PC-3 (cell line): ENCODE measurements at regions of chr22 and their contacts with region 1.

Region 1: DNA sequence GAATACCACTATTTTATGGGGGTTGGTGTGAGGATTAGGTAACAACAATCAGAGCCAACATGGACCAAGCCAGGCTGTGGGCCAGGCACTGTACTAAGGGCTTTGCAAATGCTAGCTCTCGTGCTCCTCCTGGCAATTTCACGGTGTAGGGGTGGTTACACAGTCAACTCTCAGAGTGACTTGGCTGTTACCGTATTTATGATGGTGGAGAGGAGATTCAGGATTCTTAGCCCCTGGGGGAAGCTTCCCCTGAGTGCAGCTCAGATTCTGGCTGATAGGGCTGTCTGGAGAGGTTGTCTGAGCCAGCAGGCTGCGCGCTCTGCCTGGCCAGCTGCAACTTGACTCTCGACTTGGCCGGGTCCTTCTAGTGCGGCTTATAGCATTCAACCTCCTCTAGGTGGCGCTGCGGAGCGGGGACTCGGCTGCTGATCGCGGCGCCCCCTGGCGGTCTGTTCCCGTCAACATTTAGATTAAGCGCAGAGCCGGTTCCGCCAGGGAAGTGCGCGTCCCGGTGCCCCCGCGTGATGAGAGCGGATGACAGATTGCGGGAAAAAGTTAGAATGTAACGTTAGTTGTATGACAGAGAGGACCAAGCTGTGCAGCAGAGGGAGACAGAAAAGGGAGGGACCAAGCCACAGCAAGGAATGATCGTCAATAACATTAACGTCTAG is 4.5 kb upstream of the NCF4 start:
- DNase-seq: peak; percentile 76
- ATAC-seq: peak; percentile 95
- H3K4me3 ChIP-seq: no peak overlapping the region
- H3K27ac ChIP-seq: no peak overlapping the region
- H3K4me1 ChIP-seq: no peaks in the 10 kb centered on the region
- H3K27me3 ChIP-seq: 0 out of 2 replicates have a peak, but pooled peaks cover 6% of the 10 kb centered on the region
- CTCF ChIP-seq: peak; percentile 99

Region 2: GRCh38 chr22:36781656-36782627 is 74.3 kb before region 1 on chr22:
- CTCF ChIA-PET with region 1: interaction called, 9 read pairs
- POLR2A ChIA-PET with region 1: interaction called, 3 read pairs
- intact Hi-C with region 1: loop called (anchors 1 kb)
- DNase-seq: peak; percentile 84
- ATAC-seq: peak; percentile 98
- H3K4me3 ChIP-seq: no peak overlapping the region
- H3K27ac ChIP-seq: no peak overlapping the region
- H3K4me1 ChIP-seq: peaks cover 6% of the 10 kb centered on the region
- H3K27me3 ChIP-seq: 0 out of 2 replicates have a peak, but pooled peaks cover 5% of the 10 kb centered on the region
- CTCF ChIP-seq: peak; percentile 84

Region 3: DNA sequence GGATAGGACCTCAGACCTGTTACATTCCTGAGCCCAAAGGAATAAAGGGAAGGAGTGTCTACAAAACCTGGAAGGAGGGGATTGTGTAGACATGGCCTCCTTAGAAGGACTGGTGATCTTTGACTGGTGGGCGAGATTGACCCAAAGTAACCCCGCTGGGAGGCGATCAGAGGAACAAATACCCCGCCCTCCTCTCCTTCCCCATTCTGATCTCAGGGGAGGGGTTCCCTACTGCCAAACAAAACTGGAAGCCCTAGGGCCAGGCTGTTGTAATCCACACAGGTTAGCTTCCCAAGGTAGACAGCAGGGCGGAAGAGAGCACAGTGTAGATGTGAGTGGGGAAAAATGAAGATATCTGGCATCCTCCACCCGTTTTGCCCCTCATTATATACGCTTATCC is 29.2 kb after region 1 on chr22:
- CTCF ChIA-PET with region 1: no interaction called
- POLR2A ChIA-PET with region 1: no interaction called
- intact Hi-C with region 1: no loop called
- DNase-seq: no peak
- ATAC-seq: no peak
- H3K4me3 ChIP-seq: no peak overlapping the region
- H3K27ac ChIP-seq: no peak overlapping the region
- H3K4me1 ChIP-seq: no peaks in the 10 kb centered on the region
- H3K27me3 ChIP-seq: peaks cover 4% of the 10 kb centered on the region; the same call in 1 of the 2 replicates
- CTCF ChIP-seq: no peak